CD4-positive, alpha-beta memory T cell (primary cell): ENCODE measurements at regions of chr1 and their contacts with region 1.

Region 1: GRCh38 chr1:43358746-43359693 is at the start of gene CDC20:
- DNase-seq: peak; percentile 94 to 98 (median 96)
- H3K4me3 ChIP-seq: peak within 1 kb of the TSS; percentile 58 to 87
- H3K4me3 Mint-ChIP-seq: peak within 1 kb of the TSS; percentile 86 to 93 (median 90)
- H3K27ac ChIP-seq: peak within 1 kb of the TSS; percentile 67
- H3K27ac Mint-ChIP-seq: peak within 1 kb of the TSS; percentile 59 to 96 (median 89)
- H3K4me1 ChIP-seq: peaks cover 21% of the 10 kb centered on the region
- H3K4me1 Mint-ChIP-seq: peaks cover 9 to 27% (median 17%) of the 10 kb centered on the region in 4 donors
- H3K27me3 ChIP-seq: no peaks in the 10 kb centered on the region
- H3K27me3 Mint-ChIP-seq: no peaks in the 10 kb centered on the region
- total RNA-seq, gene CDC20: 0.32 TPM in 1 of 2 experiments, not detected in the other

Region 2: DNA sequence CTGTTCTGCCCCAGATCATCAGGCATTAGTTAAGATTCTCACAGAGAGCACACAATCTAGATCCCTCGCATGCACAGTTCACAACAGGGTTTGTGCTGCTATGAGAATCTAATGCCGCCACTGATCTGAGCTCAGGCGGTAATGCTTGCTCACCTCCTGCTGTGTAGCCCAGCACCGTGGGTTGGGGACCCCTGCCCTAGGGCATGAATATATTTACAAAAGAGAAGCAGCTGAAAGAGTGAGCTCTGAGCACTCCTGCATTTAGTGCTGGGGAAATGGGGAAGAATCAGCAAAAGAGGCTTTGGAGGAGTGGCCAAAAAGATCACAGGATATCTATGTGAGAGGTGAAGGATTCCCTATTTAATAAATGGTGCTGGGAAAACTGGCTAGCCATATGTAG is 181.3 kb before region 1 on chr1:
- CTCF ChIA-PET with region 1: no interaction called
- POLR2A ChIA-PET with region 1: no interaction called
- intact Hi-C with region 1: loop called (anchors 2 kb)
- DNase-seq: no peak
- H3K4me3 ChIP-seq: no peak overlapping the region
- H3K4me3 Mint-ChIP-seq: no peak overlapping the region
- H3K27ac ChIP-seq: no peak overlapping the region
- H3K27ac Mint-ChIP-seq: peak overlapping the region in 1 of 7 donors; percentile 24
- H3K4me1 ChIP-seq: peaks cover 4% of the 10 kb centered on the region
- H3K4me1 Mint-ChIP-seq: peaks cover 4 to 6% (median 4%) of the 10 kb centered on the region in 4 donors
- H3K27me3 ChIP-seq: peaks cover 15% of the 10 kb centered on the region
- H3K27me3 Mint-ChIP-seq: peaks cover 19 to 22% of the 10 kb centered on the region in 2 donors

Region 3: DNA sequence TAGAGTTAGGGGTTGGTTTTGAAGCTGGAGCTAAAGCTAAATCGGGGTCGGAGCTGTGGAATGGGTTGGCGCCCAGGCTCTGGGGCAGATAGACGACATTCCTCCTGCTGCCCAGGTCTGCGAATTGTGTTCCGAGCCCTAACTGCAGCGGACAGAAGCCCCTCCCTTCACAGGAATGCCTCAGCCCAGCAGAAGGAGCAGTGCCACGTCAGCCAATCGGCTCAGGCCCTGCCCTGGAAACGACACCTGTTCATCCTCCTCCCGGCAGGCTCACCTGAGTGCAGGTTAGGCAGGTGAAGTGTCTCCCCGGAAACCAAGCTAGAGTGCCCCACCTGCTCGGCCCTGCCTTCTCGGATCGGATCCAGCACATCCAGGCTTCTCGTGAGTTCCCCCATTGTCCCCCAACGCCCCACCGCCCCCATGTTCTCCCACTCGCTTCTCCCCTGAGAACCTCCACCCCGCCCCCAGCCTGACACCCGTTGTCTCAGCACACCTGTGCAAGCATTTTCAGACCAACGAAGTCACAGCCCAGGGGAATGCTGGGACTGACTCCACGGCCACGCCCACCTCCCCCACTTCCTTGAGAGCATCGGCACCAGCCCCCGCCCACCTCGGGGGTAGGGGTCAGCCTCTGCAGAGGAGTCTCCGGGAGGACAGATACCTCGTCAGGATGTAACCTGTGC is 88.5 kb before region 1 on chr1:
- CTCF ChIA-PET with region 1: no interaction called
- POLR2A ChIA-PET with region 1: no interaction called
- intact Hi-C with region 1: no loop called
- DNase-seq: no peak
- H3K4me3 ChIP-seq: no peak overlapping the region
- H3K4me3 Mint-ChIP-seq: peak overlapping the region in 7 of 8 donors; percentile 43 to 79 (median 69)
- H3K27ac ChIP-seq: no peak overlapping the region
- H3K27ac Mint-ChIP-seq: peak overlapping the region in 3 of 7 donors; percentile 8 to 48 (median 37)
- H3K4me1 ChIP-seq: peaks cover 20% of the 10 kb centered on the region
- H3K4me1 Mint-ChIP-seq: peaks cover 7 to 28% (median 19%) of the 10 kb centered on the region in 4 donors
- H3K27me3 ChIP-seq: no peaks in the 10 kb centered on the region
- H3K27me3 Mint-ChIP-seq: peaks cover 9 to 18% of the 10 kb centered on the region in 2 donors

Region 4: GRCh38 chr1:43282220-43283195 is 76.5 kb before region 1 on chr1:
- CTCF ChIA-PET with region 1: no interaction called
- POLR2A ChIA-PET with region 1: no interaction called
- intact Hi-C with region 1: no loop called
- DNase-seq: no peak
- H3K4me3 ChIP-seq: no peak overlapping the region
- H3K4me3 Mint-ChIP-seq: no peak overlapping the region
- H3K27ac ChIP-seq: no peak overlapping the region
- H3K27ac Mint-ChIP-seq: peak overlapping the region in 1 of 7 donors; percentile 43
- H3K4me1 ChIP-seq: no peaks in the 10 kb centered on the region
- H3K4me1 Mint-ChIP-seq: no peaks in the 10 kb centered on the region
- H3K27me3 ChIP-seq: no peaks in the 10 kb centered on the region
- H3K27me3 Mint-ChIP-seq: peaks cover 19 to 28% of the 10 kb centered on the region in 2 donors

Region 5: GRCh38 chr1:43293896-43294760 is 64.9 kb before region 1 on chr1:
- CTCF ChIA-PET with region 1: no interaction called
- POLR2A ChIA-PET with region 1: no interaction called
- intact Hi-C with region 1: no loop called
- DNase-seq: no peak
- H3K4me3 ChIP-seq: no peak overlapping the region
- H3K4me3 Mint-ChIP-seq: no peak overlapping the region
- H3K27ac ChIP-seq: no peak overlapping the region
- H3K27ac Mint-ChIP-seq: peak overlapping the region in 1 of 7 donors; percentile 59
- H3K4me1 ChIP-seq: peaks cover 15% of the 10 kb centered on the region
- H3K4me1 Mint-ChIP-seq: peaks cover 10 to 17% (median 14%) of the 10 kb centered on the region in 4 donors
- H3K27me3 ChIP-seq: no peaks in the 10 kb centered on the region
- H3K27me3 Mint-ChIP-seq: no peaks in the 10 kb centered on the region

Region 6: DNA sequence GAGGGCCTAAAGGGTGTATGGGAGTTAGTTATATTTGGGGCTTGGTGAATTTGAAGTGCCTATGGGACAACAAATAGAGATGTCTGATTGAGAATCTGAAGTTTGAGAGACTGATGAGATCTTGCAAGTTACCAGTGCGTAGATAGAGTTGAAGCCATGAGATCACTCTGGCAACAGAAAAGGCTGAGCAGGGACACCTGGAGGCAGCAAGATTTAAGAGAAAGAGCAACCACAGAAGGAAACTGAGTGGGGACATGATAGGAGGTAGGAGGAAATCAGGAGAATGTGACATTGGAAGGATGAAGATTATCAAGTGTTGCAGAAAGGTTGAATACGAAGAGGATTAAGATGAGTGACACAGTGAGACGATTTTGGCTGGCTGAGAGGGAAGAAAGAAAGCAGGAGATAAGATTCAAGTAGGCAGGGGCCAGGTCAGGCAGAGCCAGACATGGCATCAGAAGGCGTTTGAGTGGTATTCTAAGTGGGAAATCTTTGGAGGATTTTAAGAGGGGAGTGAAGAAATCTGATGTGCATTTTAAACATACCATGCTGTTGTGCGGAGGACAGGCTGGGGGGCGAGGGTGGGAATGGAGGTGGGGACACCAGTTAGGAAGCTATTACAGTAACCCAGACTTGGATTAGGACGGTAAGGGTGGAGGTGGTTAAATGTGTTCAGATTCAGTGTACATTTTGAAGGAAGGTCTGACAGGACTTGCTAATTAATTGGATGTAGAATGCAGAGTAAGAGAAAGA is 24.4 kb before region 1 on chr1:
- CTCF ChIA-PET with region 1: no interaction called
- POLR2A ChIA-PET with region 1: no interaction called
- intact Hi-C with region 1: no loop called
- DNase-seq: no peak
- H3K4me3 ChIP-seq: no peak overlapping the region
- H3K4me3 Mint-ChIP-seq: no peak overlapping the region
- H3K27ac ChIP-seq: no peak overlapping the region
- H3K27ac Mint-ChIP-seq: peak overlapping the region in 3 of 7 donors; percentile 1 to 54 (median 31)
- H3K4me1 ChIP-seq: no peaks in the 10 kb centered on the region
- H3K4me1 Mint-ChIP-seq: no peaks in the 10 kb centered on the region
- H3K27me3 ChIP-seq: no peaks in the 10 kb centered on the region
- H3K27me3 Mint-ChIP-seq: peaks cover 0 to 3% of the 10 kb centered on the region in 2 donors

Region 7: DNA sequence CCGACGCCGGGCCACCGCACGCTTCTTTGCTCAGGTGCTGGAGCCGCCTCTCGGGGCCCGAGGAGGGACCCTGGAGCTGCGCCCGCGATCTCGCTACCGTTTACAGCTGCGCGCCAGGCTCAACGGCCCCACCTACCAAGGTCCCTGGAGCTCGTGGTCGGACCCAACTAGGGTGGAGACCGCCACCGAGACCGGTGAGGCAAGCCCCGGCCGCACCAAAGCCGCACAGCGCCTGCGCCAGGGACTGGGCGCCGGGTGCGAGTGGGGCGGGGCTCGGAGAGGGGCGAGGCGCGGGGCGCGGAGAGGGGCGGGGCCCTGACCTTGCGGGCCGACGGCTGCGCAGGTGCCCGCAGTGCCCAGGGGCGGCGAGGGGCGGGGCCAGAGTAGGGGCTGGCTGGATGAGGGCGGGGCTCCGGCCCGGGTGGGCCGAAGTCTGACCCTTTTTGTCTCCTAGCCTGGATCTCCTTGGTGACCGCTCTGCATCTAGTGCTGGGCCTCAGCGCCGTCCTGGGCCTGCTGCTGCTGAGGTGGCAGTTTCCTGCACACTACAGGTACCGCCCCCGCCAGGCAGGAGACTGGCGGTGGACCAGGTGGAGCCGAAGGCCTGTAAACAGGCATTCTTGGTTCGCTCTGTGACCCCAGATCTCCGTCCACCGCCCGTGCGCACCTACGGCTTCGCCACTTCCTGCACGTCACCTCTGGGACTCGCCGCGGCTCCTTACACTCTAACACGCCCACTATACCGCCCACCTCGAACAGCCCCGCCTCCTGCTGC is 10.0 kb before region 1 on chr1:
- CTCF ChIA-PET with region 1: interaction called, 3 read pairs
- POLR2A ChIA-PET with region 1: interaction called, 5 read pairs
- intact Hi-C with region 1: loop called (anchors 1 kb)
- DNase-seq: peak; percentile 61 to 86 (median 77)
- H3K4me3 ChIP-seq: peak overlapping the region in 1 of 2 donors; percentile 36
- H3K4me3 Mint-ChIP-seq: peak overlapping the region; percentile 61 to 89 (median 84)
- H3K27ac ChIP-seq: peak overlapping the region; percentile 49
- H3K27ac Mint-ChIP-seq: peak overlapping the region; percentile 81 to 99 (median 93)
- H3K4me1 ChIP-seq: peaks cover 5% of the 10 kb centered on the region
- H3K4me1 Mint-ChIP-seq: peaks cover 3 to 11% (median 11%) of the 10 kb centered on the region in 4 donors
- H3K27me3 ChIP-seq: no peaks in the 10 kb centered on the region
- H3K27me3 Mint-ChIP-seq: peaks cover 0 to 2% of the 10 kb centered on the region in 2 donors

Region 8: DNA sequence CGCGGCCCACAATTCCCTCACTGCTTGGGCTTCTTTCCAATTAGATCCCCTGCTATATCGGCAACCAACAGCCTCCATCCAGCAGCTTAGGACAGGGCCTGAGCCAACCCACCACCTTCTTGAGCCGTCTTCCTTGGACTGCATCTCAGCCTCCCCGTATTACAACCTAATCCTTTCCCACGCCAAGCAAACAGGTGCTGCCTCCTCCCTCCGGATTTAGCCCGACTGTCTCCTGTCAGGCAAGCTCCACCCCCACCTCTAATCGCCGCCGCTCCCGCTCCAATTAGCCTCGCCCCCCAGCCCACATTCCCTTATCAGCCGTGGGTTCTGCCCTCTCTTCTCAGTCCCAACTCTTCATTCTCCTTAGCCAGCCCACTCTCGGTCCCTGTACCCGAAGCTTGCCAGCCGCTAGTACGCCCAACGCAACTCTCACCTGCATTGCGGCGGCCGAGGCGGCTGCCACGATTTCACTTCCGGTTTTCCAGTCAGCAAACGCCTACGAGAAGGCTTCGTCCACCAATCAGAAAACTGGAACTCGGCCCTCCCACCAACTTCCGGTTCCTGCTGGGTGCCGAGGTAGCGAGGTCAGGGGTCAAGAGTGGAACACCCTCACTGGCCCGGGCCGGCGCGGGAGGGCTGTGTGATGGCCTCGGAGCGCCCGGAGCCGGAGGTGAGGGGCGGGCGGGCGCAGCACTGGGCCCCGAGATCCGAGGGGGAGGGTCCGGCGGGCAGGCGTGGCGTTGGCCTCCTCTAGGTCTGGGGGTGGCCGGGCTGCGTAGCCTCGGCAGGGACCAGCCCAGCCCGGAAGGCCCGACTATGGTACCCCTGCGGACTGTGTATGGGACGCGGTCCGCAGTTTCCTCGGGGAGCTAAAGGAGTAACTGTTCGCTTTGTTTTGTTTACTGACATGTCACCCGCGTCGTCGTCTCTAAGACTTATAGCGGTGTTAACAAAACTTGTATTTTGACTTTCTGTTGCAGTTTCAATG is 30.6 kb after region 1 on chr1 and contains the starts of genes MED8 and SZT2:
- CTCF ChIA-PET with region 1: interaction called, 3 read pairs
- POLR2A ChIA-PET with region 1: interaction called, 28 read pairs
- intact Hi-C with region 1: loop called (anchors 1 kb)
- DNase-seq: peak; percentile 88 to 93 (median 91)
- H3K4me3 ChIP-seq: peak within 1 kb of the TSS; percentile 87 to 88
- H3K4me3 Mint-ChIP-seq: peak within 1 kb of the TSS; percentile 99 to 100 (median 100)
- H3K27ac ChIP-seq: peak within 1 kb of the TSS; percentile 82
- H3K27ac Mint-ChIP-seq: peak within 1 kb of the TSS; percentile 89 to 100 (median 99)
- H3K4me1 ChIP-seq: peaks cover 28% of the 10 kb centered on the region
- H3K4me1 Mint-ChIP-seq: peaks cover 32 to 60% (median 45%) of the 10 kb centered on the region in 4 donors
- H3K27me3 ChIP-seq: no peaks in the 10 kb centered on the region
- H3K27me3 Mint-ChIP-seq: no peaks in the 10 kb centered on the region
- total RNA-seq, gene MED8: 34.0 to 35.6 TPM
- total RNA-seq, gene SZT2: 135 to 153 TPM